ENCODE measurements at regions of chr17 and their contacts with region 1.

Region 1: DNA sequence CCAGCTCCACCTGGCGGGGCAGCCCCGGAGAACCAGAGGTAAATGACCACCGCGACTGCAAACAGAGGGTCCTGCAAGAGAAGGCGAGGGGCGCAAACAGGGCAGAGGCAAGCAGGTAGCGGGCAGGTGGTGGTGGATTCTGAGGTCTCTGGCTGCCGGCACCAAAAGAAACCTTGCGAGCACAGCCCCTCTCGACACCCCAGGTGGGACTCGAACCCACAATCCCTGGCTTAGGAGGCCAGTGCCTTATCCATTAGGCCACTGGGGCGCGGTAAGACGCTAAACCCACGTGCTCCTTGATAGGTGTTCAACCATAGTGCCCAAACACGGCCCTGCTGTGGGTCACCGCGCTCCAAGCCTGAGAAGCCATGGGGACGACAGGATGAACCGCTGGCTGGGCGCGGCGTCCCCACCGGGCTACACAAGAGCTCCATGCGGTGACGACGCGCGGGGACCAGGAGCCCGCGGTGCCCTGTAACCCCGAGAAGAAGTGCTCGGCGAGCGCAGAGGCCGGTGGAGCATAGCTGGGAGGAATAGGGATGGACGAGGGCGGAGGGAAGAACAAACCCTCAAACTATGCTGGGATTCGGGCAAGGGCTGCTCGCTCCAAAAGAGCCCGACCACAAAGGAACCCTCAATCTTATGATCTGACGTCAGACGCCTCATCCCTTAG is 12.4 kb downstream of the ATP5PD start:
- DNase-seq: peak; percentile 91
- H3K4me3 ChIP-seq: peak overlapping the region; percentile 57 to 85 (median 65)
- H3K27ac ChIP-seq: peak overlapping the region; percentile 86
- H3K4me1 ChIP-seq: peaks cover 15% of the 10 kb centered on the region
- H3K27me3 ChIP-seq: no peaks in the 10 kb centered on the region
- CTCF ChIP-seq: peak in 1 of 2 donors; percentile 36

Region 2: DNA sequence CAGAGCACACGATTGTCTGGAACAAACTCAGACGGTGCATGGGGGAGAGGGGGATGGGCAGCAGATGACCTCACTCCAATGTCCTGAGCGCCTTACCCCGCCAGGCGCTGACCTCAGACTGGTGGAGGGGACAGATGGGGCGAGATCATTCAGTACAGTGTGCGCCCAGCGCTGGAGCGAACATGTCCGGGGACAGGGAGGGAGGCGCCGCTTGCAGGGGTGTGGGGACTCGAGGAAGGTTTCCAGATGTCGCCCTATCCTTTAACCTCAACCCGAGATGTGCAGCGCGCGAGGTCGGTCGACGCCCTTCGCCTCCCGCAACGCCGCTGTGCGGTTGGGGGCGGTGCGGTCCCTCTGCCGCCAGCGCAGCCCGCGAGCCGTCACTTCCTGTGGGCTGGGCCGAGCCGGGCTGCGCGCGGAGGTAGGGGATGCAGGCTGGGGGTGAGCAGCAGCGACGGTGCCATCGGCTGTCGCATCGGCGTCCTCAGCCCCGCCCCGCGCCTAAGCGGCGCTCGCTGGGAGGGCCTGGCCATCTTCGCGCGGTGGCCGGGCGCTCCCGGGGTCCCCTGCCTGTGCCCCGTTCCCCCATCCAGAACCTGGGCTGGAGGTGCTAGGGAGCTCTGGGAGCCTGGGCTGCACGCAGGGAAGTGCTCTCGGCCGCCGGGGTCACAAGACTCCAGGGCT is 52.3 kb before region 1 on chr17:
- CTCF ChIA-PET with region 1: no interaction called
- dilution Hi-C with region 1: no loop called
- in situ Hi-C with region 1: loop called in 1 of 2 experiments (anchors 5 kb)
- intact Hi-C with region 1: no loop called
- DNase-seq: no peak
- H3K4me3 ChIP-seq: peak overlapping the region; percentile 36 to 62 (median 60)
- H3K27ac ChIP-seq: no peak overlapping the region
- H3K4me1 ChIP-seq: peaks cover 18% of the 10 kb centered on the region
- H3K27me3 ChIP-seq: no peaks in the 10 kb centered on the region
- CTCF ChIP-seq: peak in 1 of 2 donors; percentile 13

Region 3: GRCh38 chr17:74987909-74988711 is 46.3 kb before region 1 on chr17:
- CTCF ChIA-PET with region 1: no interaction called
- dilution Hi-C with region 1: no loop called
- in situ Hi-C with region 1: loop called in 1 of 2 experiments (anchors 5 kb)
- intact Hi-C with region 1: loop called (anchors 1 kb)
- DNase-seq: peak; percentile 73
- H3K4me3 ChIP-seq: peak overlapping the region; percentile 83 to 92 (median 84)
- H3K27ac ChIP-seq: peak overlapping the region; percentile 72
- H3K4me1 ChIP-seq: peaks cover 44% of the 10 kb centered on the region
- H3K27me3 ChIP-seq: no peaks in the 10 kb centered on the region
- CTCF ChIP-seq: peak in 1 of 2 donors; percentile 49

Measured in mammary epithelial cell (primary cell).